Heart left ventricle (tissue), 16 donors: ENCODE measurements at regions of chr4 and their contacts with region 1.

Region 1: DNA sequence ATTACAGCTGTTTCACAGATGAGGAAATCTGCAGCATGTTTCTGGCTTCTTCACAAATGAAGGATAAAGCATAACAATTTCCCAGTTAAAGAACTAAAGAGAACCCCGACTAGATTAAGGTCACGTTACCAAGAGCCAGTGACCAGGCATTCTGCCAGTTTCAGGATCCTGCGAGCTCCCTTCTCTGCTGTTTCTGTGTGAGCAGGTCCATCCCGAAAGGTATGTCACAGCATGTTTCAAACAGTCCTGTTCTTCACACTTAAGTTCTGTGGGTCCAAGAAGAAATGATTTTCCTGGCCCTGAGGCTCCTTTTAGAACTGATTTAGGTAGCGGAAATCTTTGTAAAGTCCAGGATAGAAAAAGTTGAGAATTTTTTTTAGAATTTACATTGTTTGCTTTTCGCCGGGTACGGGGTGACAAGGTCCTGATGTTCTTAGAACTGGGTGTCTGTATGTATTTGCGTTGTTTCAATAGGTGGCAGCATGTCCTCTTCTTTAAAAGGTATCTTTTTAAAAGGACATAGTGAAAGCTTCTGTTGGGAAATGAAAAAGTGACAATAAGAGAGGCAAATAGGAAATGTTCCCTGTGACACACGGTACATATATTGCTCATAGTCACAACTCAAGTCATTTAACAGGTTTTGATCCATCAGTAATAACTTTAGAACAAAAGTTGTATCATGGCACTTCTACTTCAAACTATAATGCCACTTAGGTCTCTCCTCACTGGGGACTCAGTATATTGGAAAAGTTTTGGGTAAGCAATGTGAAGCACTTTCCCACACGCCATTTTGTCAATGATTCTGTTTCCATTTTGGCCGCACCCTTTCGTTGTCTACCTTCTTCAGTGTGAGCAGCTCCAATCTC is 18.4 kb downstream of the IL21 start:
- DNase-seq: no peak
- ATAC-seq: peak in 3 of 4 donors; percentile 47 to 81 (median 63)
- H3K4me3 ChIP-seq: no peak overlapping the region
- H3K27ac ChIP-seq: no peak overlapping the region
- H3K4me1 ChIP-seq: no peaks in the 10 kb centered on the region
- H3K27me3 ChIP-seq: peaks cover 0 to 28% (median 0%) of the 10 kb centered on the region in 9 donors
- CTCF ChIP-seq: peak in 11 of 12 donors; percentile 17 to 55 (median 41)
- POLR2A ChIP-seq: no peak

Region 2: GRCh38 chr4:122716825-122717448 is 114.4 kb after region 1 on chr4:
- intact Hi-C with region 1: loop called in 9 of 10 experiments (anchors 2 to 10 kb)
- DNase-seq: peak in 4 of 5 donors; percentile 53 to 81 (median 62)
- ATAC-seq: peak in 3 of 4 donors; percentile 82 to 86 (median 84)
- H3K4me3 ChIP-seq: no peak overlapping the region
- H3K27ac ChIP-seq: no peak overlapping the region
- H3K4me1 ChIP-seq: peaks cover 0 to 5% (median 0%) of the 10 kb centered on the region in 12 donors
- H3K27me3 ChIP-seq: no peaks in the 10 kb centered on the region
- CTCF ChIP-seq: peak; percentile 62 to 91 (median 82)
- POLR2A ChIP-seq: no peak

Region 3: DNA sequence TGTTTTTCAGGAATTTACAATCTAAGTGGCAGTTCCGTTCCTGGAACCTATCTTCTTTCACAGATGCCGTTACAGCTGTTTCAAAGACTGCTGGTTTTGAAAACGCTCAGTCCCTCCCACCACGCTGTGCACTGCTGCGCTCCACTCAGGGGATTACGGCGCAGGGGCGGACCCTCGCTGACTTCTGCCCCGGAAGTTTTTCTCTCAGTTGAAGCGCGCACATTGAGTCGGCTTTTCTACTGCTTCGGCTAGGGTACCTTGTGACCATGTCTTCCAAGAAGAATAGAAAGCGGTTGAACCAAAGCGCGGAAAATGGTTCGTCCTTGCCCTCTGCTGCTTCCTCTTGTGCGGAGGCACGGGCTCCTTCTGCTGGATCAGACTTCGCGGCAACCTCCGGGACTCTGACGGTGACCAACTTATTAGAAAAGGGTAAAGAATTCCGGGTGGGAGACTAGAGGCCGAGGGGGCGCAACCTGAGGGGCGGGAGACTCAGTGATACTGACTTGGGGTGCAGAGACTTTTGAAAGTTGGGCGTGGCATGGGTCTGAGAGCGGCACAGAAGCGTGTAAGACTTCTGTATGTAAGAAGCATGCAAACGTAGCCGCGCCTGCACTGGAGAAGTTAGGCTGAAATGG is 320.5 kb after region 1 on chr4:
- intact Hi-C with region 1: loop called in 4 of 10 experiments (anchors 5 to 10 kb)
- DNase-seq: peak; percentile 83 to 89 (median 87)
- ATAC-seq: peak; percentile 98 to 99 (median 99)
- H3K4me3 ChIP-seq: peak overlapping the region; percentile 68 to 95 (median 85)
- H3K27ac ChIP-seq: peak overlapping the region; percentile 62 to 86 (median 77)
- H3K4me1 ChIP-seq: peaks cover 0 to 21% (median 12%) of the 10 kb centered on the region in 12 donors
- H3K27me3 ChIP-seq: no peaks in the 10 kb centered on the region
- CTCF ChIP-seq: peak in 1 of 12 donors; percentile 5
- POLR2A ChIP-seq: no peak

Region 4: DNA sequence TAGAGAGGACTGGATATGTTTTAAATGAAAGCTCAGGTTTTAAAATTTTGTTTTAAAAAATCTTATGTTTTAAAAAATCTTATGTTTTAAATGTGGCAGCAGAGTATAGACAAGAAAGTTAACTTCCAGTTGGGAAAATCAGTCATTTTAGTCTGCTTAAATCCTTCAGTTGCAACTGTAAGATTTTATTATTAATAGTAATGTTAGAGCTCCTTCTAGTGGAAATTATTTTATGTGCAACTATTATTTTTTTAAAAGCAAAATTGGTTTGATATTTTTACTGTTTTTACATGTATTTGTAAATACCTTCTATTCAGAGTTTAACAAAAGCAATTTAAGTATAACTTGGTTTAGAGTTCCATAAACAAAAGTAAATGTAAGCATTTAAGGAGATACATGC is 328.4 kb after region 1 on chr4:
- intact Hi-C with region 1: loop called in 8 of 10 experiments (anchors 5 to 10 kb)
- DNase-seq: no peak
- ATAC-seq: no peak
- H3K4me3 ChIP-seq: no peak overlapping the region
- H3K27ac ChIP-seq: no peak overlapping the region
- H3K4me1 ChIP-seq: no peaks in the 10 kb centered on the region
- H3K27me3 ChIP-seq: no peaks in the 10 kb centered on the region
- CTCF ChIP-seq: peak; percentile 48 to 78 (median 64)
- POLR2A ChIP-seq: no peak